Caco-2 (cell line): ENCODE measurements at regions of chr3 and their contacts with region 1.

Region 1: DNA sequence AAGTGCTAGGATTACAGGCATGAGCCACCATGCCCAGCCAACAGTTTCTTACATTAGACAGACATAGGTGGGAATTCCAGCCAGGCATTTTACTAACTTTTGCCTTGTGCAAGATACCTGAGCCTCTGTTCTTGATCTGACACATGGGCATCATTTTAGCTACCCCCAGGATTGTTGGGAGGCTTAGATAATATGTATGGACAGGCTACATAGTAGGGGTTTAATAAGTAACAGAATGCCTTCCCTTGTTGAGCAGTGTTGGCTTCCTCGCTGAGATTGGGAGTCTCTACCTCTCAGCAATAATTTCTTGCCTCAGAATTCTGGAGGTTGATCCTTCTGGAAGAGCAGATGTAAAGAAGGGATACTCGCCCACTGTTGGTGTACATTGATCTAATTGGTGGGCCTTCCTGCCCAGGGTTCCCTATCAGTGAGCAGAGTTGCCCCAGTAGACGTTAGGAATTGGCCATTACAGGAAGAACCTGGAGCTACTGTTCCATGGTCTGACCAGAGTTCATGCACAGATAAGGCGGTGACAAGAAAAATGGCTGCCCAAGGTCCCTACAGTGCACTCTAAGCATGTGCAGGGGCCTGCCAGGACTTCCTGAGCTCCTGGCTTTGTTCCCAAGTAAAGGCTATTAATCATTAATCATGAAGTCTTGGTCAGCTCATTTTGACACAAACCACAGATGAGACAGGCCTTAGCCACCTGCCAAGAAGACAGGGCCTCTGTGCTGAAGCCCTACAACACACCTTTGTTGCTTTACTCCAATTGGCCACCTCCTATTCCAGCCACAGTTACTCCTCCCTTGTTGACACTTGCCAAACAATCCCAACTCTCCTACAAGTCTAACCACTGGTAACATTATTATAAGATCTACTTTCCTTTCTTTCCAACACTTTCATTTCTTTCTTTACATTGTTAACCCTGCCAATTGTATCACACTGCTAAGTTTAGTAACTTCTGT is 5.0 kb upstream of the IL17RE start:
- DNase-seq: peak; percentile 84 to 91
- H3K4me3 ChIP-seq: no peak overlapping the region
- H3K4me3 Mint-ChIP-seq: peak overlapping the region; percentile 17
- H3K27ac Mint-ChIP-seq: peak overlapping the region; percentile 84
- H3K4me1 ChIP-seq: peaks cover 64% of the 10 kb centered on the region
- H3K4me1 Mint-ChIP-seq: peaks cover 34% of the 10 kb centered on the region
- H3K27me3 ChIP-seq: no peaks in the 10 kb centered on the region
- H3K27me3 Mint-ChIP-seq: no peaks in the 10 kb centered on the region
- CTCF ChIP-seq: no peak

Region 2: DNA sequence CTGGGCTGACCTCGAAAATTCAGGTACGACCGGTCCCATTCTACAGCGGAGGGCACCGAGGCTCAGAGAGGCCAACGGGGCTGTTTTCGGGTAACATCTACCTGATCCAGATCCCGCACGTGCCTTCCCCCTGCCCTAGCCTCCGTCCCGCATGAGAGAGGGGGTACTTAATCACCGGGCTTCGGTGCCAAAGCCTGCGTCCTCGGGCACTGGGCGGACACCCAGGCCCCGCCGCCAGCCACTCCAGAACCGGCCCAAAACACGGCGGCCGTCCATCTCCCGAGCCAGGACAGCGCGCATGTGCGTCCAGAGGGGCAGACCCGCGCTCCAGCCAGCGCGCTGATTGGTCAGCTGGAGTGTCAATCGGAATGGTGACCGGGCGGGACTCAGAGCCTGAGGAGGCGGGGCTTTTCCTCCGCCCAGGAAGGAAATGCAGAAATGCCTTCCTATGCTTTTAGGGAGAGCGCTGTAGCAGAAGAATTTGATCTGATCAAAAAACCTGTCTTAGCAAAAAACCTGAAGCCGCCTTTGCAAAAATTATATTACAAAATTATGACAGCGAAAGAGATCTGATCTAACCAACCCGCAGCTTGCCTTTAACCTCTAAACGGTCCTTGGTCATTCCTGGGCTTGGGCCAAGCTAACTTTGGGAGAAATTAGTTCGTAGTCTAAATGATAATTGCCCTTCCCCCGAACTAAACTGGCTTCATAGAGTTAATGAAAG is 53.8 kb before region 1 on chr3 and contains the start of gene RPUSD3:
- CTCF ChIA-PET with region 1: interaction called, 3 read pairs
- POLR2A ChIA-PET with region 1: interaction called, 3 read pairs
- intact Hi-C with region 1: loop called (anchors 1 kb)
- DNase-seq: peak; percentile 96 to 98
- H3K4me3 ChIP-seq: peak within 1 kb of the TSS; percentile 79
- H3K4me3 Mint-ChIP-seq: peak within 1 kb of the TSS; percentile 99
- H3K27ac Mint-ChIP-seq: peak within 1 kb of the TSS; percentile 94
- H3K4me1 ChIP-seq: peaks cover 20% of the 10 kb centered on the region
- H3K4me1 Mint-ChIP-seq: peaks cover 14% of the 10 kb centered on the region
- H3K27me3 ChIP-seq: no peaks in the 10 kb centered on the region
- H3K27me3 Mint-ChIP-seq: no peaks in the 10 kb centered on the region
- CTCF ChIP-seq: no peak
- total RNA-seq, gene RPUSD3: 54.8 and 61.8 TPM in 2 replicates

Region 3: GRCh38 chr3:9884555-9885165 is 13.0 kb before region 1 on chr3:
- CTCF ChIA-PET with region 1: interaction called, 12 read pairs
- POLR2A ChIA-PET with region 1: interaction called, 16 read pairs
- intact Hi-C with region 1: loop called (anchors 1 kb)
- DNase-seq: peak; percentile 83 to 87
- H3K4me3 ChIP-seq: no peak overlapping the region
- H3K4me3 Mint-ChIP-seq: peak overlapping the region; percentile 56
- H3K27ac Mint-ChIP-seq: peak overlapping the region; percentile 94
- H3K4me1 ChIP-seq: peaks cover 18% of the 10 kb centered on the region
- H3K4me1 Mint-ChIP-seq: peaks cover 25% of the 10 kb centered on the region
- H3K27me3 ChIP-seq: no peaks in the 10 kb centered on the region
- H3K27me3 Mint-ChIP-seq: no peaks in the 10 kb centered on the region
- CTCF ChIP-seq: peak in 1 of 2 experiments; percentile 21

Region 4: GRCh38 chr3:9946112-9947024 is 48.7 kb after region 1 on chr3:
- CTCF ChIA-PET with region 1: interaction called, 14 read pairs
- POLR2A ChIA-PET with region 1: interaction called, 7 read pairs
- intact Hi-C with region 1: no loop called
- DNase-seq: peak; percentile 89 to 93
- H3K4me3 ChIP-seq: peak overlapping the region; percentile 60
- H3K4me3 Mint-ChIP-seq: peak overlapping the region; percentile 83
- H3K27ac Mint-ChIP-seq: peak overlapping the region; percentile 83
- H3K4me1 ChIP-seq: 0 out of 2 replicates have a peak, but pooled peaks cover 6% of the 10 kb centered on the region
- H3K4me1 Mint-ChIP-seq: no peaks in the 10 kb centered on the region
- H3K27me3 ChIP-seq: no peaks in the 10 kb centered on the region
- H3K27me3 Mint-ChIP-seq: no peaks in the 10 kb centered on the region
- CTCF ChIP-seq: peak; percentile 50 to 56